GM18951 (cell line): ENCODE measurements at regions of chr12 and their contacts with region 1.

Region 1: DNA sequence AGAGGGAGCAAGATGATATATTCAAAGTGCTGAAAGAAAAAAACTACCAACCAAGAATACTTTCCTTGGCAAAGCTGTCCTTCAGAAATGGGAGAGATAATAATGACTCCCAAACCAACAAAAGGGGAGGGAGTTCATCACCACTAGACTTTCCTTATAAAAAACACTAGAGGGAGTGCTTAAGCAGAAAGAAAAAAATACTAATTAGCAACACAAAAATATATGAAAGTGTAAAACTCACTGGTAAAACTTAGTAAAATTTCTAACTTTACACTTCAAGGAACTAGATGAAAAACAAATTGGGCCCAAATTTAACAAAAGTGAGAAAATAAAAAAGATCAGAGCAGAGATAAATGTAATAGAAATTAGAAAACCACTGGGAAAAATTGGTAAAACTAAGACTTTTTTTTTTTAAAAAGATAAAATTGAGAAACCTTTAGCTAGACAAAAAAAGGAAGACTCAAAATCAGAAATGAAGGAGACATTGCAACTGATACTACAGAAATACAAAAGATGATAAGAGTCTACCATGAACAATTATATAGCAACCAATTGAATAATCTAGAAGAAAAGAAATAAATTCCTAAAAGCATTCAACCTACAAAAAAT is 60.4 kb upstream of the FAR2 start:
- POLR2A ChIP-seq: no peak

Region 2: GRCh38 chr12:29317556-29318363 is 229.0 kb after region 1 on chr12:
- in situ Hi-C with region 1: loop called (anchors 10 kb)
- POLR2A ChIP-seq: no peak